ENCODE measurements at regions of chr2 and their contacts with region 1.

Region 1: GRCh38 chr2:16608661-16609643 is 56.7 kb downstream of the CYRIA start:
- DNase-seq: peak; percentile 73 to 88 (median 82)
- ATAC-seq: peak; percentile 91
- H3K4me3 ChIP-seq: peak overlapping the region; percentile 67
- H3K4me3 Mint-ChIP-seq: peak overlapping the region; percentile 95
- H3K27ac ChIP-seq: no peak overlapping the region
- H3K27ac Mint-ChIP-seq: peak overlapping the region; percentile 82
- H3K4me1 ChIP-seq: no peaks in the 10 kb centered on the region
- H3K4me1 Mint-ChIP-seq: peaks cover 8% of the 10 kb centered on the region
- H3K27me3 ChIP-seq: no peaks in the 10 kb centered on the region
- H3K27me3 Mint-ChIP-seq: peaks cover 5% of the 10 kb centered on the region
- CTCF ChIP-seq: peak; percentile 89

Region 2: GRCh38 chr2:15636972-15637785 is 971.8 kb before region 1 on chr2:
- CTCF ChIA-PET with region 1: no interaction called
- POLR2A ChIA-PET with region 1: no interaction called
- intact Hi-C with region 1: loop called (anchors 1 kb)
- DNase-seq: peak; percentile 27 to 74 (median 47)
- ATAC-seq: peak; percentile 80
- H3K4me3 ChIP-seq: no peak overlapping the region
- H3K4me3 Mint-ChIP-seq: no peak overlapping the region
- H3K27ac ChIP-seq: no peak overlapping the region
- H3K27ac Mint-ChIP-seq: peak overlapping the region; percentile 49
- H3K4me1 ChIP-seq: no peaks in the 10 kb centered on the region
- H3K4me1 Mint-ChIP-seq: peaks cover 7% of the 10 kb centered on the region
- H3K27me3 ChIP-seq: no peaks in the 10 kb centered on the region
- H3K27me3 Mint-ChIP-seq: no peaks in the 10 kb centered on the region
- CTCF ChIP-seq: peak; percentile 94

Region 3: GRCh38 chr2:16553226-16553625 is 55.7 kb before region 1 on chr2:
- CTCF ChIA-PET with region 1: no interaction called
- POLR2A ChIA-PET with region 1: no interaction called
- intact Hi-C with region 1: loop called (anchors 1 kb)
- DNase-seq: peak in 5 of 14 experiments; percentile 2 to 49 (median 25)
- ATAC-seq: no peak
- H3K4me3 ChIP-seq: no peak overlapping the region
- H3K4me3 Mint-ChIP-seq: no peak overlapping the region
- H3K27ac ChIP-seq: no peak overlapping the region
- H3K27ac Mint-ChIP-seq: no peak overlapping the region
- H3K4me1 ChIP-seq: no peaks in the 10 kb centered on the region
- H3K4me1 Mint-ChIP-seq: no peaks in the 10 kb centered on the region
- H3K27me3 ChIP-seq: no peaks in the 10 kb centered on the region
- H3K27me3 Mint-ChIP-seq: peaks cover 5% of the 10 kb centered on the region
- CTCF ChIP-seq: peak; percentile 40

Region 4: GRCh38 chr2:16578081-16578768 is 30.7 kb before region 1 on chr2:
- CTCF ChIA-PET with region 1: no interaction called
- POLR2A ChIA-PET with region 1: no interaction called
- intact Hi-C with region 1: no loop called
- DNase-seq: no peak
- ATAC-seq: no peak
- H3K4me3 ChIP-seq: no peak overlapping the region
- H3K4me3 Mint-ChIP-seq: no peak overlapping the region
- H3K27ac ChIP-seq: no peak overlapping the region
- H3K27ac Mint-ChIP-seq: no peak overlapping the region
- H3K4me1 ChIP-seq: no peaks in the 10 kb centered on the region
- H3K4me1 Mint-ChIP-seq: no peaks in the 10 kb centered on the region
- H3K27me3 ChIP-seq: no peaks in the 10 kb centered on the region
- H3K27me3 Mint-ChIP-seq: peaks cover 15% of the 10 kb centered on the region
- CTCF ChIP-seq: no peak

Region 5: GRCh38 chr2:16756831-16757644 is 148.1 kb after region 1 on chr2:
- CTCF ChIA-PET with region 1: interaction called, 3 read pairs
- POLR2A ChIA-PET with region 1: no interaction called
- intact Hi-C with region 1: loop called (anchors 1 kb)
- DNase-seq: peak; percentile 18 to 76 (median 44)
- ATAC-seq: peak; percentile 67
- H3K4me3 ChIP-seq: no peak overlapping the region
- H3K4me3 Mint-ChIP-seq: no peak overlapping the region
- H3K27ac ChIP-seq: no peak overlapping the region
- H3K27ac Mint-ChIP-seq: no peak overlapping the region
- H3K4me1 ChIP-seq: no peaks in the 10 kb centered on the region
- H3K4me1 Mint-ChIP-seq: no peaks in the 10 kb centered on the region
- H3K27me3 ChIP-seq: no peaks in the 10 kb centered on the region
- H3K27me3 Mint-ChIP-seq: peaks cover 5% of the 10 kb centered on the region
- CTCF ChIP-seq: peak; percentile 75